Endothelial cell of umbilical vein (primary cell): ENCODE measurements at regions of chr10 and their contacts with region 1.

Region 1: GRCh38 chr10:103895411-103896186 is 22.4 kb downstream of the STN1 start:
- DNase-seq: peak; percentile 72
- H3K4me3 ChIP-seq: no peak overlapping the region
- H3K27ac ChIP-seq: peak overlapping the region; percentile 85
- H3K4me1 ChIP-seq: peaks cover 33% of the 10 kb centered on the region
- H3K27me3 ChIP-seq: no peaks in the 10 kb centered on the region
- CTCF ChIP-seq: no peak
- POLR2A ChIP-seq: no peak

Region 2: DNA sequence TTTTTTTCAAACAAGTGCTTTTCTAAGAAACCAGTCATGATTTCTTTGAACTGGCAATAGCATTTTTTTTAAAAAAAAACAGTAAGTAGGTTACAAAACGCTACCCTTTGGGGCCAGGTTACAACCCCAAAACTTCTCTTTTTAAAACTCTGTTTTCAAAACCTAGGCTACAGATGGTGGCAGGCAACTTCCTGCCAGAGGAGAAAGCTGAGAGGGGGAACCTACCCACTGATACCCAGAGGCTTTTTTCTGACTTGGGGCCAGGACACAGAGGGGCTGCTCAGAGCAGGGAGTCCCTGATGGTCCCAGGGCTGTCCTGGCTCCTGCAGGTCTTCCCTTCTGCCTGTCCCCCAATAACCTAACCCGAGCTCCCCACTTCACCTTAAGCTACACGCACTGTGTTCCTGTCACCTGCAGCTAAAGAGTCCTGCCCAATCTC is 15.4 kb after region 1 on chr10:
- CTCF ChIA-PET with region 1: interaction called, 11 read pairs
- POLR2A ChIA-PET with region 1: no interaction called
- dilution Hi-C with region 1: no loop called
- intact Hi-C with region 1: loop called (anchors 1 kb)
- DNase-seq: no peak
- H3K4me3 ChIP-seq: no peak overlapping the region
- H3K27ac ChIP-seq: no peak overlapping the region
- H3K4me1 ChIP-seq: peaks cover 28% of the 10 kb centered on the region
- H3K27me3 ChIP-seq: no peaks in the 10 kb centered on the region
- CTCF ChIP-seq: no peak
- POLR2A ChIP-seq: no peak

Region 3: GRCh38 chr10:103918053-103918846 is 22.7 kb after region 1 on chr10 and contains the start of gene STN1:
- CTCF ChIA-PET with region 1: interaction called, 3 read pairs
- POLR2A ChIA-PET with region 1: no interaction called
- dilution Hi-C with region 1: no loop called
- intact Hi-C with region 1: loop called (anchors 1 kb)
- DNase-seq: peak; percentile 96
- H3K4me3 ChIP-seq: peak within 1 kb of the TSS; percentile 15 to 63 (median 39)
- H3K27ac ChIP-seq: peak within 1 kb of the TSS; percentile 76
- H3K4me1 ChIP-seq: peaks cover 36% of the 10 kb centered on the region
- H3K27me3 ChIP-seq: no peaks in the 10 kb centered on the region
- CTCF ChIP-seq: no peak
- POLR2A ChIP-seq: peak; percentile 81
- total RNA-seq, gene STN1: 12.7 and 15.3 TPM in 2 replicates

Region 4: GRCh38 chr10:103929381-103929921 is 33.9 kb after region 1 on chr10:
- CTCF ChIA-PET with region 1: no interaction called
- POLR2A ChIA-PET with region 1: no interaction called
- dilution Hi-C with region 1: no loop called
- intact Hi-C with region 1: no loop called
- DNase-seq: no peak
- H3K4me3 ChIP-seq: no peak overlapping the region
- H3K27ac ChIP-seq: no peak overlapping the region
- H3K4me1 ChIP-seq: no peaks in the 10 kb centered on the region
- H3K27me3 ChIP-seq: no peaks in the 10 kb centered on the region
- CTCF ChIP-seq: no peak
- POLR2A ChIP-seq: no peak

Region 5: GRCh38 chr10:104022026-104022425 is 126.4 kb after region 1 on chr10:
- CTCF ChIA-PET with region 1: interaction called, 6 read pairs
- POLR2A ChIA-PET with region 1: no interaction called
- dilution Hi-C with region 1: no loop called
- intact Hi-C with region 1: loop called (anchors 2 kb)
- DNase-seq: peak; percentile 46
- H3K4me3 ChIP-seq: peak overlapping the region in 1 of 3 experiments; percentile 1
- H3K27ac ChIP-seq: peak overlapping the region; percentile 65
- H3K4me1 ChIP-seq: peaks cover 41% of the 10 kb centered on the region
- H3K27me3 ChIP-seq: no peaks in the 10 kb centered on the region
- CTCF ChIP-seq: no peak
- POLR2A ChIP-seq: peak; percentile 46